ENCODE measurements at regions of chr3 and their contacts with region 1.

Region 1: DNA sequence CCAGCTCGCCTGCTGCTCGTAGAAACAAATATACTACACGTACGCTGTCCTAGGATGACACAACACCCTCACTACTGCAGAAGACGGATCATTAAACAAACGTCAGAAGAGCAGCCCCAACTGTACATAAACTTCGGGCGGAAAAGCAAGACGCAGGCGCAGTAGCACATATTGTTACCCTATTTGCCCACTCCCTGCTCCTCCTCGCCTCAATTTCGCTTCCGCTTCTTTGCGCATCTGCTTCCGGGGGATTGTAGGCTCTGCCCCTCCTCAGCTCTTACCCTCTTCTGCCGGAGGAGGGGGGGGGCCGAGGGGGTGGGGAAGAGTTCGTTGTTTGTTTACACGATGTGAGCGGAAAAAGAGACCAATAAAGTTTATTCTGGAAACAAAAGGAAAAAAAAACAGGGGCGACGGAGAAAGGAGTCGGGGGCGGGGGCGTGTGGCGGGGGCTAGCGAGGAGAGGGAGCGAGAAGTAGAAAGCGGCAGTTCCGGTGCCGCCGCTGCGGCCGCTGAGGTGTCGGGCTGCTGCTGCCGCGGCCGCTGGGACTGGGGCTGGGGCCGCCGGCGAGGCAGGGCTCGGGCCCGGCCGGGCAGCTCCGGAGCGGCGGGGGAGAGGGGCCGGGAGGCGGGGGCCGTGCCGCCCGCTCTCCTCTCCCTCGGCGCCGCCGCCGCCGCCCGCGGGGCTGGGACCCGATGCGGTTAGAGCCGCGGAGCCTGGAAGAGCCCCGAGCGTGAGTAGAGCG is at the start of gene PIK3CA:
- DNase-seq: peak; percentile 97
- ATAC-seq: peak; percentile 91
- H3K4me3 ChIP-seq: peak within 1 kb of the TSS; percentile 92 to 100 (median 98)
- H3K27ac ChIP-seq: peak within 1 kb of the TSS; percentile 87
- H3K4me1 ChIP-seq: peaks cover 22% of the 10 kb centered on the region
- H3K27me3 ChIP-seq: no peaks in the 10 kb centered on the region; a peak in 1 of 5 replicates
- CTCF ChIP-seq: no peak
- EP300 ChIP-seq: peak in 1 of 2 experiments; percentile 21; a peak in 1 of 4 replicates
- POLR2A ChIP-seq: peak; percentile 27 to 49; a peak in 2 of 4 replicates
- RAD21 ChIP-seq: peak; percentile 22; the same call in 1 of the 2 replicates
- total RNA-seq, gene PIK3CA: 11.4 and 20.4 TPM in 2 replicates

Region 2: DNA sequence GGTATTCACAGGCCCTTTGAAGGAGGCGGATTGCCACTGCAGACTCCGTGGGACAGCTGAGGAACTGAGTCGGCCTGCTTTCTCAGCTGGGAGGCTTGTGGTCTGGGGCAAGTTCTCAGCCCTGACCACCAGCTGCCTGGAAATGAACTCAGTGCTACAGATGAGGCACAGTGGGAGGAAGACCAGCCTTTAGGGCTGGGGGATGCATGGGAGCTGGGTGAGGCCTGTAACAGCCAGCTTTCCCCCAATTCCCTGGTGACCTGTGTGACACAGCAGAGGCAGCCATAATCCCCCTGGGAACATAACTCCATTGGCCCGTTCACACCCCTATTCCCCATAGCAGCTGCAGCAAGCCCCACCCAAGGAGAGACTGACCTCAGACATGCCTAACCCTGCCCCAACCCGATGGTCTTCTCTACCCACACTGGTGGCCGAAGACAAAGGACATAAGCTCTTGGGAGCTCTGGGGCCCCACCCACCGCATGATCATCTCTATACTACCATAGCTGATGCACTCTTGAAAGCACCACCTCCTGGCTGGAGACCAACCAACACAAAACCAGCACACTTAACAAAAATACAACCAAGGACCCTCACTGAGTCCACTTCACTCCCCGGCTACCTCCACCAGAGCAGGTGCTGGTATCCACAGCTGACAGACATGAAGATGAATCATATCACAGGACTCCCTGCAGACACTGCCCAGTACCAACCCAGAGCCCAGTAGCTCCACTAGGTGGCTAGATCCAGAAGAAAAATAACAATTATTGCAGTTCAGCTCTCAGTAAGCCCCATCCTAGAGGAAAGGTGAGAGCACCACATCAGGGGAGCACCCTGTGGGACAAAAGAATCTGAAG is 101.3 kb before region 1 on chr3:
- CTCF ChIA-PET with region 1: no interaction called
- POLR2A ChIA-PET with region 1: no interaction called
- in situ Hi-C with region 1: no loop called
- intact Hi-C with region 1: no loop called
- DNase-seq: no peak
- ATAC-seq: peak; percentile 81
- H3K4me3 ChIP-seq: no peak overlapping the region
- H3K27ac ChIP-seq: no peak overlapping the region
- H3K4me1 ChIP-seq: peaks cover 9% of the 10 kb centered on the region; the same call in 1 of the 2 replicates
- H3K27me3 ChIP-seq: no peaks in the 10 kb centered on the region
- CTCF ChIP-seq: no peak
- EP300 ChIP-seq: no peak
- POLR2A ChIP-seq: no peak
- RAD21 ChIP-seq: no peak

Region 3: DNA sequence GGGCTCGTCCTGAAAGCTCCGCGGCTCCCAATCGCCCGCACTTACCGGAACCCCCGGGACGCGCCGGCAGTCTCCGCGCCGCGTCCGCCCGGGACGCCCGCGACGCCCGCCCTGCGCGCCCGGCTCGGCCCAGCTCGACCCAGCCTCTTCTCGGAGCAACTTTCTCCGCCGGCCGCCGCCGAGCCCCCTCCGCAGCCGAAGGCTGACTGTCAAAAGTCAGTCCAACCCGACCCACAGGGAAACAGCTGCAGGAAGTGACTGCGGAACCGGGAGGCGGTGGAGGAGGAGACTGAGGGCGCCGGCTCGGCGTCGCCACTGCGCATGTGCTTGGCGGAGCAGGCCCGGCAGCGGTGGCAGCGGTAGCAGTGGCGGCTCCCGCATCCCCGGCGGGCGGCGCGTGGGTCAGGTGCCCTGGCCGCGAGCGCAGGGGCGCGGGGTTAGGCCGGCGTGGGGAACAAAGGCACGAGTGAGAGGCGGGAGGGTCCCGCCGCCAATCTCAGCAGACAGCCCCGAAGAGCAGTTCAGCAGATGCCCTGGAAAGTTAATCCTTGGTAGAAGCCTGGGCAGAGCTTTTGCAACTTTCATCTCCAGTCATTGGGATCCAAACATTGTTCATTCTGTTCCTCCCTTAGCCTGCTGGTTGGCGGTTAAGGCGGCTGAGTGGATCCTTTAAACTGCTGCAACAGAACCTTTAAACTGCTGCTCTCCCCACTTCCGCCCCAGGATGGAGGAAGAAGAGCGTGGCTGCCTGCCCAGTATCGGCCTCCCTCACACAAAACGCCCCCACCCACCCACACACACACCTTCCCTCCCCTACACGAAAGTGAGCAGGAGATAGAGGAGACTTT is 76.3 kb before region 1 on chr3 and contains the start of gene ZMAT3:
- CTCF ChIA-PET with region 1: no interaction called
- POLR2A ChIA-PET with region 1: no interaction called
- in situ Hi-C with region 1: no loop called
- intact Hi-C with region 1: loop called (anchors 5 kb)
- DNase-seq: peak; percentile 71
- ATAC-seq: peak; percentile 96
- H3K4me3 ChIP-seq: peak within 1 kb of the TSS; percentile 82 to 91 (median 87)
- H3K27ac ChIP-seq: peak within 1 kb of the TSS; percentile 67
- H3K4me1 ChIP-seq: peaks cover 35% of the 10 kb centered on the region
- H3K27me3 ChIP-seq: peaks cover 0 to 8% of the 10 kb centered on the region in 2 experiments; a peak in 3 of 5 replicates
- CTCF ChIP-seq: no peak
- EP300 ChIP-seq: no peak
- POLR2A ChIP-seq: peak; percentile 56 to 91; a peak in 3 of 4 replicates
- RAD21 ChIP-seq: no peak
- total RNA-seq, gene ZMAT3: 11.4 and 19.4 TPM in 2 replicates

Region 4: GRCh38 chr3:179108086-179108485 is 40.0 kb before region 1 on chr3:
- CTCF ChIA-PET with region 1: no interaction called
- POLR2A ChIA-PET with region 1: no interaction called
- in situ Hi-C with region 1: no loop called
- intact Hi-C with region 1: no loop called
- DNase-seq: no peak
- ATAC-seq: no peak
- H3K4me3 ChIP-seq: no peak overlapping the region
- H3K27ac ChIP-seq: no peak overlapping the region
- H3K4me1 ChIP-seq: no peaks in the 10 kb centered on the region
- H3K27me3 ChIP-seq: no peaks in the 10 kb centered on the region; a peak in 1 of 5 replicates
- CTCF ChIP-seq: no peak
- EP300 ChIP-seq: no peak
- POLR2A ChIP-seq: no peak
- RAD21 ChIP-seq: no peak

Region 5: GRCh38 chr3:179250803-179251476 is 102.9 kb after region 1 on chr3 and contains the start of gene KCNMB3:
- CTCF ChIA-PET with region 1: no interaction called
- POLR2A ChIA-PET with region 1: interaction called, 4 read pairs
- in situ Hi-C with region 1: no loop called
- intact Hi-C with region 1: loop called (anchors 5 kb)
- DNase-seq: peak; percentile 87
- ATAC-seq: peak; percentile 88
- H3K4me3 ChIP-seq: peak within 1 kb of the TSS; percentile 5 to 53 (median 45); a peak in 5 of 6 replicates
- H3K27ac ChIP-seq: peak within 1 kb of the TSS; percentile 83
- H3K4me1 ChIP-seq: peaks cover 47% of the 10 kb centered on the region
- H3K27me3 ChIP-seq: no peaks in the 10 kb centered on the region
- CTCF ChIP-seq: no peak
- EP300 ChIP-seq: peak in 1 of 2 experiments; percentile 86; a peak in 2 of 4 replicates
- POLR2A ChIP-seq: peak in 1 of 2 experiments; percentile 37; a peak in 1 of 4 replicates
- RAD21 ChIP-seq: no peak
- total RNA-seq, gene KCNMB3: 2.4 and 4.3 TPM in 2 replicates

Region 6: GRCh38 chr3:179272385-179272784 is 124.3 kb after region 1 on chr3:
- CTCF ChIA-PET with region 1: interaction called, 7 read pairs
- POLR2A ChIA-PET with region 1: no interaction called
- in situ Hi-C with region 1: no loop called
- intact Hi-C with region 1: loop called (anchors 1 kb)
- DNase-seq: no peak
- ATAC-seq: peak; percentile 60
- H3K4me3 ChIP-seq: no peak overlapping the region
- H3K27ac ChIP-seq: no peak overlapping the region
- H3K4me1 ChIP-seq: peaks cover 20% of the 10 kb centered on the region
- H3K27me3 ChIP-seq: no peaks in the 10 kb centered on the region; a peak in 1 of 5 replicates
- CTCF ChIP-seq: peak; percentile 62
- EP300 ChIP-seq: no peak
- POLR2A ChIP-seq: no peak
- RAD21 ChIP-seq: no peak

Region 7: GRCh38 chr3:179421500-179421899 is 273.5 kb after region 1 on chr3:
- CTCF ChIA-PET with region 1: no interaction called
- POLR2A ChIA-PET with region 1: no interaction called
- in situ Hi-C with region 1: no loop called
- intact Hi-C with region 1: no loop called
- DNase-seq: no peak
- ATAC-seq: no peak
- H3K4me3 ChIP-seq: no peak overlapping the region
- H3K27ac ChIP-seq: no peak overlapping the region
- H3K4me1 ChIP-seq: no peaks in the 10 kb centered on the region
- H3K27me3 ChIP-seq: no peaks in the 10 kb centered on the region
- CTCF ChIP-seq: peak; percentile 54
- EP300 ChIP-seq: no peak
- POLR2A ChIP-seq: no peak
- RAD21 ChIP-seq: no peak

Measured in HepG2 (cell line).